ENCODE measurements at regions of chr2 and their contacts with region 1.

Region 1: DNA sequence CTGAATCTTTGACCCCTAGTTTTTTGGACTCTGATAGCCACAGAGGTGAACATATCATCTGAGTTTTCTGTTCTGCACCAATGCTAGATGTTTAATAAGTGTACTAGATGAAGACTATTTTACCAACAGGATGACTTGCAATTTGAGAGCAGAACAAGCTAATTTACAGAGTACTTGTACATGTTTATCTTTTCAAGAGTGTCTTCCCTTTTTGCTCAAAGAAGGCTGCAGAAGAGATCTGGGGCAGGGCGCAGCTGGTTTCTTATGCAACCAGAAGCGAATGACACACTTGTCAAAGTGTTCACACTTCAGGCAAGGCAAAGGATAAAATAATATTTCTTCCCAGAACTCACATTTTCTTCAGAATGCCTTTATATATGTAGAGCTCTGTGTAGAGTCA is 86.0 kb downstream of the VWA3B start:
- DNase-seq: no peak
- H3K4me3 ChIP-seq: no peak overlapping the region
- H3K27ac ChIP-seq: no peak overlapping the region
- H3K4me1 ChIP-seq: peaks cover 0 to 2% of the 10 kb centered on the region in 2 donors
- H3K27me3 ChIP-seq: no peaks in the 10 kb centered on the region
- CTCF ChIP-seq: no peak

Region 2: GRCh38 chr2:98134172-98135005 is 38.6 kb before region 1 on chr2:
- intact Hi-C with region 1: loop called (anchors 5 kb)
- DNase-seq: peak in 1 of 2 donors; percentile 64
- H3K4me3 ChIP-seq: no peak overlapping the region
- H3K27ac ChIP-seq: no peak overlapping the region
- H3K4me1 ChIP-seq: no peaks in the 10 kb centered on the region
- H3K27me3 ChIP-seq: no peaks in the 10 kb centered on the region
- CTCF ChIP-seq: no peak